GM12878 (cell line): ENCODE measurements at regions of chr14 and their contacts with region 1.

Region 1: GRCh38 chr14:98173305-98173704 is 1098.7 kb downstream of the BCL11B start:
- DNase-seq: no peak
- ATAC-seq: no peak; the same call in 2 of the 3 replicates
- H3K4me3 ChIP-seq: no peak overlapping the region
- H3K27ac ChIP-seq: no peak overlapping the region
- H3K4me1 ChIP-seq: peaks cover 5% of the 10 kb centered on the region
- H3K27me3 ChIP-seq: no peaks in the 10 kb centered on the region
- CTCF ChIP-seq: no peak
- EP300 ChIP-seq: no peak
- POLR2A ChIP-seq: no peak
- RAD21 ChIP-seq: no peak

Region 2: DNA sequence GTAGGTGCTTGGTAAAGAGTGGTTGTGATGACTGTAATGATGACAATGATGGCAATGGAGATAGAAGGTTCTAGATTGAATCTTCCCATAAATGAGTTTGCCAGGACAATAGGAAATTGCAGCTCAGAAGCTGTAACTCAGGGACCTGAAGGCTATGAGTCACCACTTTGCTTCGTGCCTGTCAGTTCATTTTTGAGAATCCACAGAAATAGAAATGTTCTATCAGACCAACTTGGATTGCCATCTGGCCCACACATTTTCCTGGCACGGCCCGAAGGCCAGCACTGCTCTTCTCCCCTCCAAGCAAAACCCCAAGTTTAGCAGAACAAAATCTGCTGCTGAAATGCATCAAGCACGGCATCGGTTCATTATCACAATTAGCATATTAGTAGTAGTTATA is 28.3 kb before region 1 on chr14:
- CTCF ChIA-PET with region 1: interaction called, 45 read pairs
- POLR2A ChIA-PET with region 1: interaction called, 5 read pairs
- RAD21 ChIA-PET with region 1: interaction called, 91 read pairs
- SMC1A ChIA-PET with region 1: interaction called, 461 read pairs
- in situ Hi-C with region 1: no loop called
- intact Hi-C with region 1: no loop called
- DNase-seq: no peak
- ATAC-seq: no peak
- H3K4me3 ChIP-seq: no peak overlapping the region
- H3K27ac ChIP-seq: no peak overlapping the region
- H3K4me1 ChIP-seq: no peaks in the 10 kb centered on the region
- H3K27me3 ChIP-seq: no peaks in the 10 kb centered on the region
- CTCF ChIP-seq: no peak
- EP300 ChIP-seq: no peak
- POLR2A ChIP-seq: no peak
- RAD21 ChIP-seq: no peak

Region 3: GRCh38 chr14:98161356-98161755 is 11.9 kb before region 1 on chr14:
- CTCF ChIA-PET with region 1: interaction called, 11 read pairs
- POLR2A ChIA-PET with region 1: interaction called, 11 read pairs
- RAD21 ChIA-PET with region 1: interaction called, 8 read pairs
- SMC1A ChIA-PET with region 1: interaction called, 14 read pairs
- in situ Hi-C with region 1: no loop called
- intact Hi-C with region 1: no loop called
- DNase-seq: no peak
- ATAC-seq: no peak
- H3K4me3 ChIP-seq: no peak overlapping the region
- H3K27ac ChIP-seq: no peak overlapping the region
- H3K4me1 ChIP-seq: no peaks in the 10 kb centered on the region
- H3K27me3 ChIP-seq: no peaks in the 10 kb centered on the region
- CTCF ChIP-seq: no peak
- EP300 ChIP-seq: no peak
- POLR2A ChIP-seq: no peak
- RAD21 ChIP-seq: no peak

Region 4: DNA sequence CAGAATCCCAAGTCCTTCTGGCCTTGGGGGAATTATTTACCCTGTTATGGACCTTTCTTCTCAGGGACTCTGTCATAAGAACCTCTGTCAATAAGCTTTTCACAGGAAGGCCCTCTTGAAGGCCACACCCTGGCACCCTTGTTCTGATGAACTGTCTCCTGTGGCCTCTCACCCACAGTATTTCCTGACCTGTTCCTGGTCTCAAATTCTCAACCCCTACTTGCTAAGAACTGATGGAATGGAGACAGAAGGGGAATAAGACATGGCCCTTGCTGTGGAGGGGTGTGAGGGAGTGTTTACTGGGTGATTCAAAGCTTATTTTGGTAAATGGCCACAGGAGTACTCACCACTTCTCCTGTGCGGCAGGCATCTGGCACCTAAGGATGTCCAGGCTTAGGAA is 15.8 kb after region 1 on chr14:
- CTCF ChIA-PET with region 1: interaction called, 18 read pairs
- POLR2A ChIA-PET with region 1: interaction called, 10 read pairs
- RAD21 ChIA-PET with region 1: interaction called, 309 read pairs
- SMC1A ChIA-PET with region 1: interaction called, 24 read pairs
- in situ Hi-C with region 1: no loop called
- intact Hi-C with region 1: no loop called
- DNase-seq: no peak
- ATAC-seq: no peak
- H3K4me3 ChIP-seq: no peak overlapping the region
- H3K27ac ChIP-seq: no peak overlapping the region
- H3K4me1 ChIP-seq: no peaks in the 10 kb centered on the region
- H3K27me3 ChIP-seq: no peaks in the 10 kb centered on the region
- CTCF ChIP-seq: no peak
- EP300 ChIP-seq: no peak
- POLR2A ChIP-seq: no peak
- RAD21 ChIP-seq: no peak

Region 5: DNA sequence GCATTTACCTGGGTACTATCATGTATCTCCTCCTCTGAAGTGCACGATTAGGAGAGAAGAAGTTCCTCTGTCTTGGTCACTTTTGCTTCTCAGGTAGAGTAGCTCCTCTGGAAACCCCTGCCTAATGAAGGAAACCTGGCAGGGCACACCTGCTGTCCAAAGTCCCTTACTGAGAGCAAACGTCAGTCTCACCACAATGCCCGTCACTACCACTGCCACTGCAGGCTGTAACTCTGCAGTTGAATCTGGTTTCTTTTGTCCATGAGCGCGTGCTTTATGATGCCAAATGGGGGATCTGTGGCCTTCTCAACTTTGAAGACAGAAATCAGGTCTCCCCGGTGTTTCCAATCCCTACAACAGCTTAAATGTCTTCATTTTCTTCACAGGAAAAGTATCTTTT is 30.1 kb after region 1 on chr14:
- CTCF ChIA-PET with region 1: interaction called, 10 read pairs
- POLR2A ChIA-PET with region 1: interaction called, 4 read pairs
- RAD21 ChIA-PET with region 1: interaction called, 309 read pairs
- SMC1A ChIA-PET with region 1: interaction called, 47 read pairs
- in situ Hi-C with region 1: no loop called
- intact Hi-C with region 1: loop called (anchors 2 kb)
- DNase-seq: no peak
- ATAC-seq: no peak
- H3K4me3 ChIP-seq: no peak overlapping the region
- H3K27ac ChIP-seq: no peak overlapping the region
- H3K4me1 ChIP-seq: peaks cover 3% of the 10 kb centered on the region
- H3K27me3 ChIP-seq: no peaks in the 10 kb centered on the region
- CTCF ChIP-seq: no peak
- EP300 ChIP-seq: no peak
- POLR2A ChIP-seq: no peak
- RAD21 ChIP-seq: no peak

Region 6: GRCh38 chr14:98210045-98210672 is 36.9 kb after region 1 on chr14:
- CTCF ChIA-PET with region 1: no interaction called
- POLR2A ChIA-PET with region 1: interaction called, 3 read pairs
- RAD21 ChIA-PET with region 1: interaction called, 309 read pairs
- SMC1A ChIA-PET with region 1: interaction called, 32 read pairs
- in situ Hi-C with region 1: no loop called
- intact Hi-C with region 1: no loop called
- DNase-seq: no peak
- ATAC-seq: peak; percentile 47
- H3K4me3 ChIP-seq: no peak overlapping the region
- H3K27ac ChIP-seq: no peak overlapping the region
- H3K4me1 ChIP-seq: peaks cover 7% of the 10 kb centered on the region
- H3K27me3 ChIP-seq: no peaks in the 10 kb centered on the region
- CTCF ChIP-seq: no peak
- EP300 ChIP-seq: no peak
- POLR2A ChIP-seq: no peak
- RAD21 ChIP-seq: 0 out of 2 replicates have a peak, but pooled peaks have one; percentile 0

Region 7: GRCh38 chr14:98227000-98227726 is 53.9 kb after region 1 on chr14:
- CTCF ChIA-PET with region 1: no interaction called
- POLR2A ChIA-PET with region 1: interaction called, 9 read pairs
- RAD21 ChIA-PET with region 1: interaction called, 14 read pairs
- SMC1A ChIA-PET with region 1: interaction called, 8 read pairs
- in situ Hi-C with region 1: no loop called
- intact Hi-C with region 1: no loop called
- DNase-seq: peak; percentile 51
- ATAC-seq: peak; percentile 95
- H3K4me3 ChIP-seq: no peak overlapping the region
- H3K27ac ChIP-seq: peak overlapping the region; percentile 75
- H3K4me1 ChIP-seq: peaks cover 5% of the 10 kb centered on the region
- H3K27me3 ChIP-seq: no peaks in the 10 kb centered on the region
- CTCF ChIP-seq: no peak
- EP300 ChIP-seq: peak in 1 of 2 experiments; percentile 54; a peak in 1 of 4 replicates
- POLR2A ChIP-seq: no peak
- RAD21 ChIP-seq: peak; percentile 13; the same call in 1 of the 2 replicates

Region 8: GRCh38 chr14:98428483-98428994 is 255.2 kb after region 1 on chr14:
- CTCF ChIA-PET with region 1: no interaction called
- POLR2A ChIA-PET with region 1: no interaction called
- RAD21 ChIA-PET with region 1: no interaction called
- SMC1A ChIA-PET with region 1: no interaction called
- in situ Hi-C with region 1: no loop called
- intact Hi-C with region 1: no loop called
- DNase-seq: no peak
- ATAC-seq: no peak
- H3K4me3 ChIP-seq: no peak overlapping the region
- H3K27ac ChIP-seq: no peak overlapping the region
- H3K4me1 ChIP-seq: no peaks in the 10 kb centered on the region
- H3K27me3 ChIP-seq: no peaks in the 10 kb centered on the region
- CTCF ChIP-seq: no peak
- EP300 ChIP-seq: no peak
- POLR2A ChIP-seq: no peak
- RAD21 ChIP-seq: no peak